Activated CD8-positive, alpha-beta memory T cell treated with anti-CD3 and anti-CD28 coated beads, Interleukin-2, amount 10 ng/mL, durations not matched to agents 7 days and 5 days (primary cell): ENCODE measurements at regions of chr2 and their contacts with region 1.

Region 1: GRCh38 chr2:37648331-37649011 is 23.0 kb downstream of the CDC42EP3 start:
- DNase-seq: peak; percentile 70
- ATAC-seq: peak; percentile 83
- H3K4me3 Mint-ChIP-seq: peak overlapping the region; percentile 48
- H3K27ac Mint-ChIP-seq: peak overlapping the region; percentile 86
- H3K4me1 Mint-ChIP-seq: peaks cover 78% of the 10 kb centered on the region
- H3K27me3 Mint-ChIP-seq: no peaks in the 10 kb centered on the region

Region 2: GRCh38 chr2:37295469-37296073 is 352.9 kb before region 1 on chr2:
- CTCF ChIA-PET with region 1: no interaction called
- DNase-seq: no peak
- ATAC-seq: no peak
- H3K4me3 Mint-ChIP-seq: no peak overlapping the region
- H3K27ac Mint-ChIP-seq: no peak overlapping the region
- H3K4me1 Mint-ChIP-seq: no peaks in the 10 kb centered on the region
- H3K27me3 Mint-ChIP-seq: no peaks in the 10 kb centered on the region

Region 3: DNA sequence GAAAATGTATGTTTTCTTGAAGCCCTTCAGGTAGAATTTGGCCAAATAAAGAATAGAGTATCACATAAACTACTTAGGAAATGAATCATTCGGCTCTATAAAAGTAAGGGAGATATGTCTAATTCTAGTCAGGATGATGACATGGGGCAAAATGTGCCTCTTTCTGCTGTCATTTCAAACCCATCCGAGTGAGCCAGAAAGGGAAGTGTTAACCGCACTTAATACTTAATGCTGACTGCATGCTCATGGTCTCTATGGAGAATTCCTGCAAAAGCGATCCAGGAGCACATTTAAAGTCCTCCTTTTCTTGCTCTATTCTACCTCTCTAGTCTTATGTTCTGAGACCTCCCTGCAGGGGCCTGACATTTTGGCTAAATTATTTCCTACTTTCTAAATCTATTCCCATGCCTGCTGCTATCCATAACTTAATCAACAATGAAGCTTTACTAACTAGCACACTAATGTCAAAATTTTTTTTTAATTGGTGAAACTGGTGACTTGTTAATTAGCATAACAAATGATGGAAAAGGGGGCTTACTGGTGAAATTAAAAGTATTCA is 104.4 kb before region 1 on chr2:
- CTCF ChIA-PET with region 1: interaction called, 10 read pairs
- DNase-seq: no peak
- ATAC-seq: no peak
- H3K4me3 Mint-ChIP-seq: no peak overlapping the region
- H3K27ac Mint-ChIP-seq: no peak overlapping the region
- H3K4me1 Mint-ChIP-seq: no peaks in the 10 kb centered on the region
- H3K27me3 Mint-ChIP-seq: peaks cover 13% of the 10 kb centered on the region

Region 4: GRCh38 chr2:37561615-37562569 is 86.6 kb before region 1 on chr2:
- CTCF ChIA-PET with region 1: no interaction called
- DNase-seq: peak; percentile 58
- ATAC-seq: peak; percentile 79
- H3K4me3 Mint-ChIP-seq: no peak overlapping the region
- H3K27ac Mint-ChIP-seq: no peak overlapping the region
- H3K4me1 Mint-ChIP-seq: peaks cover 16% of the 10 kb centered on the region
- H3K27me3 Mint-ChIP-seq: no peaks in the 10 kb centered on the region

Region 5: DNA sequence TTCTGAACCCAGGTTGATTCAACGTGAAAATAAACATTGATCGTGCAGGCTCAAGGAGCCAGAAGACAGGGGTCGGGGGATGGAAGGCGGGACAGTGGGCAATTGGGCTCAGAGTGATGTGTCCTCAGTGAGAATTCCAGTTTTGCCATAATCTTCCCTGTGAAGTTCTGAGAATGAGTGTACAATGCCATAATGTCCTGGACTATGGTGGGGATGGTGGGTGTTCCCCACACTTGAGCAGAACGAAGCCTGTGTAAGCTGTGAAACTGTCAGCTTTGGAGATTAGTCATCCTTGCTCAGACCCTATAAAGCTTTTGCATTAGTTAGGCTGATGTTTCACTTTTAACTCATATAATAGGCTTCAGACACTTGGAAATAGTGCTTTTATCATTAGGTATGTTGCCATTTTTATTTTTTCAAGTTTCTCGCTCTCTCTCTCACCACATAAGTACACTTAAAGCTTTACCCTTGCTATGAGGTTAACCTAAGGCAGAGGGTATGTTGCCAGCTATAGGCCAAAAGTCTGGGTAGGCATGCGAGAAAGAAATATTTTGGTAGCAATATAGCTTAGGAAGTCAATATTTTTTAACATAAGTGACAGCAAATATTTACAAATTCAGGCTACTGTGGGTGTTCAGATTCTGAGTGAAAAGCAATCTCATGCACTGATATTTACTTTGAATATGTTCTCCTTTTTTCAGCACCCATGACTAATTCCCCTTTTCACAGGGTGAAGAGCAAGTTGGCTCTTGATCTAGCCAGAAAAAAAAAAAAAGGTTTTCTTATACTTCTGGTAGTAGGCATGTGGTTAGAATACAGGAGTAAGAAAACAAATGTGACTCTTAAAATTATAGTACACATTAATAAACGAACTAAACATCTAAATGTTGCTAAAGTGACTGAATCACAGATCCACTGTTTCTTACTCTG is 24.2 kb before region 1 on chr2:
- CTCF ChIA-PET with region 1: interaction called, 19 read pairs
- DNase-seq: peak; percentile 65
- ATAC-seq: peak; percentile 86
- H3K4me3 Mint-ChIP-seq: peak overlapping the region; percentile 49
- H3K27ac Mint-ChIP-seq: peak overlapping the region; percentile 88
- H3K4me1 Mint-ChIP-seq: peaks cover 55% of the 10 kb centered on the region
- H3K27me3 Mint-ChIP-seq: no peaks in the 10 kb centered on the region

Region 6: GRCh38 chr2:37671009-37671815 is 22.7 kb after region 1 on chr2 and contains the start of gene CDC42EP3:
- CTCF ChIA-PET with region 1: interaction called, 14 read pairs
- DNase-seq: peak; percentile 78
- ATAC-seq: peak; percentile 77
- H3K4me3 Mint-ChIP-seq: peak within 1 kb of the TSS; percentile 86
- H3K27ac Mint-ChIP-seq: peak within 1 kb of the TSS; percentile 84
- H3K4me1 Mint-ChIP-seq: peaks cover 39% of the 10 kb centered on the region
- H3K27me3 Mint-ChIP-seq: no peaks in the 10 kb centered on the region
- total RNA-seq, gene CDC42EP3: 27.6 to 32.5 TPM

Region 7: GRCh38 chr2:37816036-37816435 is 167.6 kb after region 1 on chr2:
- CTCF ChIA-PET with region 1: no interaction called
- DNase-seq: no peak
- ATAC-seq: no peak
- H3K4me3 Mint-ChIP-seq: no peak overlapping the region
- H3K27ac Mint-ChIP-seq: no peak overlapping the region
- H3K4me1 Mint-ChIP-seq: no peaks in the 10 kb centered on the region
- H3K27me3 Mint-ChIP-seq: no peaks in the 10 kb centered on the region